Mammary epithelial cell (primary cell): ENCODE measurements at regions of chr17 and their contacts with region 1.

Region 1: GRCh38 chr17:62671583-62672312 is 44.3 kb downstream of the MRC2 start:
- DNase-seq: peak; percentile 97
- H3K4me3 ChIP-seq: peak overlapping the region in 2 of 3 experiments; percentile 28 to 32
- H3K27ac ChIP-seq: peak overlapping the region; percentile 63
- H3K4me1 ChIP-seq: peaks cover 56% of the 10 kb centered on the region
- H3K27me3 ChIP-seq: no peaks in the 10 kb centered on the region
- CTCF ChIP-seq: peak; percentile 22 to 54

Region 2: DNA sequence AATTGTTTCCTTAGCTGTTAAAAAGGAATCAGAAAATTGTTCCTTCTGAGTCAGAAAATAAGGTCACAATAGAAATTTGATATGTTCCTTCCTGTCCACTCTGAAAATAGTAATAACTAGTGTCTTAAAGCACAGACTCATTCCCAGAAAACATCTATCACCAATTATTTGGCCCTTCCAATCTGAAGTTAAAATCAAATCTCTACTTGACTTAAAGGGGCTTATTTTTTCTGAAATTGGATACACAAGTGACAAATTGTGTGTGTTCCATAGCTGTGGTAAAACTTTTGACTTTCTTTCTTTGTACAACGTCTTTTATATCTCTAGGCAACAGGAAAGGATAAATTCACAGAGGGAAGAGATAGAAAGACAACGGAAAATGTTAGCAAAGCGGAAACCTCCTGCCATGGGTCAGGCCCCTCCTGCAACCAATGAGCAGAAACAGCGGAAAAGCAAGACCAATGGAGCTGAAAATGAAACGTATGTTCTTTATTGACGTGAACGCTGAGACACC is 98.8 kb before region 1 on chr17:
- CTCF ChIA-PET with region 1: no interaction called
- dilution Hi-C with region 1: no loop called
- in situ Hi-C with region 1: no loop called
- intact Hi-C with region 1: no loop called
- DNase-seq: no peak
- H3K4me3 ChIP-seq: no peak overlapping the region
- H3K27ac ChIP-seq: no peak overlapping the region
- H3K4me1 ChIP-seq: no peaks in the 10 kb centered on the region
- H3K27me3 ChIP-seq: no peaks in the 10 kb centered on the region
- CTCF ChIP-seq: no peak

Region 3: DNA sequence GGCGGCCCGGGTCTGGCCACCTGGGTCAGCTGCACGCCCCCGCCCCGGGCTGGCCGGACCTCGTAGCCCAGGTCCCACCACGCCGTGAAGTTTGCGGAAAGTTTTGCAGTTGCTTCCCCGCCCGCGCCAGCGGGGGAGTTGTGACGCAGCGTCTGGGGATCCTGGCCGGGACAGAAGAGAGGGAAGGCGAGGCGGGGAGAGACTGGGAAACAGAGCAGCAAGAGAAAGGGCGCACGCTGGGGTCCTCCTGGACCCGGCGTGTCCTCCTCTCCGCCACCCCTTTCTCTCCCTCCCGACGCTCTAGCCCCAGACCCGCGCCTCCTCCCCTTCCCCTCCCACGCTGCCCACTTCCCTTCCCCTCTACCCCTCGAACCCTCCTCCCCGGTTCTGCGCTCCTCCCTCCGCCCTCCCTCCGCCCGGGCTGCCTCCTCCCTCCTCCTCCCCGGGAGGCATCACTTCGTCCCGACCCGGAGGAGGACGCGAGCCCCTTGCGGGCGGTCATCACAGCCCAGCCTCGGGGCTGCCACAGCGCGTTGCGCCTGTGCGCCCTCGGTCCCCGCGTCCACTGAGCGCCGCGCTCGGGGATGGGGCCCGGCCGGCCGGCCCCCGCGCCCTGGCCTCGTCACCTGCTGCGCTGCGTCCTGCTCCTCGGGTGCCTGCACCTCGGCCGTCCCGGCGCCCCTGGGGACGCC is 44.4 kb before region 1 on chr17 and contains the start of gene MRC2:
- CTCF ChIA-PET with region 1: no interaction called
- dilution Hi-C with region 1: no loop called
- in situ Hi-C with region 1: no loop called
- intact Hi-C with region 1: loop called (anchors 1 kb)
- DNase-seq: peak; percentile 67
- H3K4me3 ChIP-seq: peak within 1 kb of the TSS; percentile 54 to 80 (median 79)
- H3K27ac ChIP-seq: peak within 1 kb of the TSS; percentile 31
- H3K4me1 ChIP-seq: peaks cover 38% of the 10 kb centered on the region
- H3K27me3 ChIP-seq: no peaks in the 10 kb centered on the region
- CTCF ChIP-seq: no peak
- total RNA-seq, gene MRC2: 147 to 512 TPM

Region 4: DNA sequence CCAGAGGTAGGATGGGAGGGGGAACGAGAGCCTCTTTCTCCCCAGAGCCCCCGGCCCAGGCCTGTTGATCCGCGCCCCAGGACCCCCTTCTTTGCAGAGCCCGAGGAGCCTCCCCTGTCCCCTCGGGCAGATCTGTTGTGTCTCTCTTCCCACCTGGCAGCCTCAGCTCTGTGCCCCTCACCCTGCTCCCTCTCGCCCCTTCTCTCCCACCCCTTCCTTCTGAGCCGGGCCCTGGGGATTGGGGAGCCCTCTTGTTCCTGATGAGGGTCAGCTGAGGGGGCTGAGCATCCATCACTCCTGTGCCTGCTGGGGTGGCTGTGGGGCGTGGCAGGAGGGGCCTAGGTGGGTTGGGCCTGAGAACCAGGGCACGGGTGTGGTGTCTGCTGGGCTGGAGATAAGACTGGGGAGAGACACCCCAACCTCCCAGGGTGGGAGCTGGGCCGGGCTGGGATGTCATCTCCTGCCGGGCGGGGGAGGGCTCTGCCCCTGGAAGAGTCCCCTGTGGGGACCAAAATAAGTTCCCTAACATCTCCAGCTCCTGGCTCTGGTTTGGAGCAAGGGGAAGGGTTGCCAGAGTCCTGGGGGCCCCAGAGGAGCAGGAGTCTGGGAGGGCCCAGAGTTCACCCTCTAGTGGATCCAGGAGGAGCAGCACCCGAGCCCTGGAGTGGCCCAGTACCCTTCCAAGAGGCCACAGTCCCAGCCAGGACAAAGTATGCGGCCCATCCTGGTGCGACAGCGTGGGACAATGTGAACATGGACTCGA is 21.2 kb after region 1 on chr17:
- CTCF ChIA-PET with region 1: no interaction called
- dilution Hi-C with region 1: no loop called
- in situ Hi-C with region 1: no loop called
- intact Hi-C with region 1: loop called (anchors 1 kb)
- DNase-seq: no peak
- H3K4me3 ChIP-seq: no peak overlapping the region
- H3K27ac ChIP-seq: no peak overlapping the region
- H3K4me1 ChIP-seq: peaks cover 45% of the 10 kb centered on the region
- H3K27me3 ChIP-seq: no peaks in the 10 kb centered on the region
- CTCF ChIP-seq: peak; percentile 33 to 53

Region 5: DNA sequence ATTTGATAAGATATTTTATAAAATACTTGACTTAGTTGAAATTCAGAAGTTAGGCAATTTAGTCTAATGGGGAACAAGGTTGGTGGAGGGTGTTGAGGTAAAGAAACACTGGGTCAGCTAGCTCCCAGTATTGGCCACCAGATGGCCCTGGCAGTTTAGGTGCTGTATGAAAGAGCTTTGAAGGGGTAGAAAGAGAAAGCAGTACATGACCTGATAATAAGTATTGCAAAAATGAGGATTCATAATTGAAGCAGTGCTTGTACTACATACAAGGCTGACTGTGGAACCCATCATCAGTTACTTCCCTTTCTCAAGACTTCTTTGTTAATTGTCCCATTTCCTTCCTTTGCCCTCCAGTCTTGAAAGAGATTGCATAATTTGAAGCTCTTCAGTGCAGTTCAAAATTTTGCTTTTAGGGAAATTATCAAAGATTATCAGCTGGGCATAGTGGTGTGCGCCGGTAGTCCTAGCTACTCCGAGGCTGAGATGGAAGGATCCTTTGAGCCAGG is 323.7 kb after region 1 on chr17:
- CTCF ChIA-PET with region 1: no interaction called
- dilution Hi-C with region 1: no loop called
- in situ Hi-C with region 1: no loop called
- intact Hi-C with region 1: no loop called
- DNase-seq: peak; percentile 43
- H3K4me3 ChIP-seq: no peak overlapping the region
- H3K27ac ChIP-seq: no peak overlapping the region
- H3K4me1 ChIP-seq: peaks cover 15% of the 10 kb centered on the region
- H3K27me3 ChIP-seq: no peaks in the 10 kb centered on the region
- CTCF ChIP-seq: peak; percentile 53 to 72

Region 6: DNA sequence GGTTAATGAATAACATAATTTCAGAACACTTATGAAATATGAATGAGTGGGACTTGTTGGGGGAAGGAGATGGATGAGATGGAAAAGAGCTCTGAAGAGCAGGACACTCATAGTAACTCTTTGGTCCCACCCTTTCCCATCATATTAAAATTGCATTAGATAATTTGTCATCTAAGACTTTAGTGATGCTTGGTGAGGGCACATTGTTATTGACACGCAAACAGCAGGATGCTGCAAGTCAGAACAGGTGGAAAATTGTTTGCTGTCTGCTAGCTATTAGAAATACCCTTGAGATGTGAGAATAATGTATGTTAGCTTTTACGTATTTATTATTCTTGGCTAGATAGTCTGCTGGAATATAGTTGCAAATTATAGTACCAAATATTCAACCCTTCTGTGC is 370.0 kb after region 1 on chr17:
- CTCF ChIA-PET with region 1: interaction called, 11 read pairs
- dilution Hi-C with region 1: no loop called
- in situ Hi-C with region 1: no loop called
- intact Hi-C with region 1: no loop called
- DNase-seq: peak; percentile 43
- H3K4me3 ChIP-seq: no peak overlapping the region
- H3K27ac ChIP-seq: no peak overlapping the region
- H3K4me1 ChIP-seq: peaks cover 25% of the 10 kb centered on the region
- H3K27me3 ChIP-seq: no peaks in the 10 kb centered on the region
- CTCF ChIP-seq: no peak

Region 7: GRCh38 chr17:63406689-63407330 is 735.1 kb after region 1 on chr17:
- CTCF ChIA-PET with region 1: no interaction called
- dilution Hi-C with region 1: no loop called
- in situ Hi-C with region 1: loop called (anchors 10 to 25 kb)
- intact Hi-C with region 1: loop called (anchors 1 kb)
- DNase-seq: peak; percentile 77
- H3K4me3 ChIP-seq: no peak overlapping the region
- H3K27ac ChIP-seq: peak overlapping the region; percentile 55
- H3K4me1 ChIP-seq: peaks cover 7% of the 10 kb centered on the region
- H3K27me3 ChIP-seq: no peaks in the 10 kb centered on the region
- CTCF ChIP-seq: peak; percentile 80 to 86

Region 8: GRCh38 chr17:63419949-63420867 is 748.5 kb after region 1 on chr17:
- CTCF ChIA-PET with region 1: no interaction called
- dilution Hi-C with region 1: no loop called
- in situ Hi-C with region 1: loop called (anchors 10 to 25 kb)
- intact Hi-C with region 1: no loop called
- DNase-seq: no peak
- H3K4me3 ChIP-seq: no peak overlapping the region
- H3K27ac ChIP-seq: no peak overlapping the region
- H3K4me1 ChIP-seq: peaks cover 18% of the 10 kb centered on the region
- H3K27me3 ChIP-seq: no peaks in the 10 kb centered on the region
- CTCF ChIP-seq: no peak

Region 9: DNA sequence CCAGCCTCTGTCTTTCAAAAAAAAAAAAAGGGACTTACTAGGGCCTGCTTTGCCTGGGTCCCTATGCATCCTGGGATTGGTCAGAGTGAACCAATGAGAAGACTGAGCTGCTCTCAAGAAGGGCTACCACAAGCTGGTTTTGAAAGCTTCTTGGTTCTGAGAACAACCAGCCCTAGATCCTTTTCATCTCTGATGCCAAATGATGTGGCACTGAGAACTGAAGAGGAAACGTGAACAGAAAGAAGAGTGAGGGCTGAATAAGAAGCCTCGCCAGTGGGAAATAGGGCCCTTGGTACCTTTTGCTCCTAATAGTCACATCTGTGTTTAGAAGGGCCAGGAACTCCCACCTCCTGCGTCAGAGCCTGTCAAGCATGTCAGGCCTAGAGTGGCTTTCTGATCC is 939.6 kb after region 1 on chr17:
- CTCF ChIA-PET with region 1: no interaction called
- dilution Hi-C with region 1: no loop called
- in situ Hi-C with region 1: loop called in 1 of 2 experiments (anchors 25 kb)
- intact Hi-C with region 1: loop called (anchors 5 kb)
- DNase-seq: no peak
- H3K4me3 ChIP-seq: no peak overlapping the region
- H3K27ac ChIP-seq: no peak overlapping the region
- H3K4me1 ChIP-seq: no peaks in the 10 kb centered on the region
- H3K27me3 ChIP-seq: no peaks in the 10 kb centered on the region
- CTCF ChIP-seq: no peak